ENCODE measurements at regions of chr1 and their contacts with region 1.

Region 1: DNA sequence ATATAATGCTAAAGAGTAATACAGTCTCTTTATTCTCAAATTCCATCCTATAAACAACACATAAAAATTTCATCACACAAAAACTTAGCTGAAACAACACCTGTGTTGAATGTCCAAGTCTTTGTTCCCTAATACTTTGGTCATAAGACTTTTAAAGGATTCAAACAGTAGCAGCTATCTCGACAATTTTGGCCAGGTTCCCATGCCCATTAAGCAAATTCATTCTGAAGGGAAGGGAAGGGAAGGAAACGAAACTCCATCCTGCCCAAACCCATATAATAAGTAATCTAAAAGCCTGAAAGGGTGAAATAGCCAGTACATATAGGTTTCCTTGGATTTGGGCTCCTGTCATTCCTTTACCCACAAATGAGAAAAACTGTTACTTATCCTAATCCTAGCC is 7.5 kb downstream of the IVNS1ABP start:
- DNase-seq: no peak
- ATAC-seq: no peak
- H3K4me3 ChIP-seq: no peak overlapping the region
- H3K27ac ChIP-seq: no peak overlapping the region
- H3K4me1 ChIP-seq: peaks cover 29% of the 10 kb centered on the region
- H3K27me3 ChIP-seq: no peaks in the 10 kb centered on the region
- CTCF ChIP-seq: no peak

Region 2: DNA sequence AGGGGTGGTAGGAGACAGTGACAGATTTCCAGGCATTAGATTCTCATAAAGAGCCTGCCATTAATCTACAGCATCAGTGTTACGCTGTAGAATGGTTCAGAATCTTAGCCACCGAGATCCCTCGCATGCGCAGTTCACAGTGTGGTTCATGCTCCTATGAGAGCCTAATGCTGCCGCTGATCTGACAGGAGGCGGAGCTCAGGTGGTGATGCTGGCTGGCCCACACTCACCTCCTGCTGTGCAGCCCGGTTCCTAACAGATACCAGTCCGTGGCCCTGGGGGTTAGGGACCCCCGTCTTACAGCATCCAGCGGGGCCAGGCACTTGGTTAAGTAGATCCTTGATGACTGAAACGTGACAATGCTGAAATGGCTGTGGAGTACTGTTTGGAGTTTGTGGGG is 1086.3 kb before region 1 on chr1:
- intact Hi-C with region 1: no loop called
- DNase-seq: no peak
- ATAC-seq: peak in 1 of 4 donors; percentile 23
- H3K4me3 ChIP-seq: peak overlapping the region; percentile 42
- H3K27ac ChIP-seq: no peak overlapping the region
- H3K4me1 ChIP-seq: no peaks in the 10 kb centered on the region
- H3K27me3 ChIP-seq: no peaks in the 10 kb centered on the region
- CTCF ChIP-seq: no peak

Region 3: DNA sequence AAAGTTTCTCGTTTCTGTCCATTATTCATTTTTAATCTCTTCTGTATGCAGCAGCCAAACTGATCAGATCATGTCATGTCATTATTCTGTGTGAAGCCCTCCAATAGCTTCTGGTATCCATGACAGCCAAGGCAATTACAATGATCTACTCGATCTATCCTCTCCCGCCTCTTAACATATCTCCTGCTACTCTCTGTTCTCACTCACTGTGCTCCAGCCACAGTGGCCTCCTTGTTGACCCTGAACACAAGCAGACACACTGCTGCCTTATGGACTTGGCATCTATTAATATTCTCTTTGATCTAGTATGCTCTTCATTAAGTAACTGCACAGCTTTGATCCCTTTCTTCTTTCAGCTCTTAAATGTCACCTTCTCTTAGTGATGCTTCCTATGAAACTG is 1006.0 kb after region 1 on chr1:
- intact Hi-C with region 1: loop called in 1 of 2 experiments (anchors 10 kb)
- DNase-seq: no peak
- ATAC-seq: no peak
- H3K4me3 ChIP-seq: no peak overlapping the region
- H3K27ac ChIP-seq: no peak overlapping the region
- H3K4me1 ChIP-seq: no peaks in the 10 kb centered on the region
- H3K27me3 ChIP-seq: no peaks in the 10 kb centered on the region
- CTCF ChIP-seq: no peak

Measured in psoas muscle (tissue), 8 donors.